ENCODE measurements at regions of chr19 and their contacts with region 1.

Region 1: DNA sequence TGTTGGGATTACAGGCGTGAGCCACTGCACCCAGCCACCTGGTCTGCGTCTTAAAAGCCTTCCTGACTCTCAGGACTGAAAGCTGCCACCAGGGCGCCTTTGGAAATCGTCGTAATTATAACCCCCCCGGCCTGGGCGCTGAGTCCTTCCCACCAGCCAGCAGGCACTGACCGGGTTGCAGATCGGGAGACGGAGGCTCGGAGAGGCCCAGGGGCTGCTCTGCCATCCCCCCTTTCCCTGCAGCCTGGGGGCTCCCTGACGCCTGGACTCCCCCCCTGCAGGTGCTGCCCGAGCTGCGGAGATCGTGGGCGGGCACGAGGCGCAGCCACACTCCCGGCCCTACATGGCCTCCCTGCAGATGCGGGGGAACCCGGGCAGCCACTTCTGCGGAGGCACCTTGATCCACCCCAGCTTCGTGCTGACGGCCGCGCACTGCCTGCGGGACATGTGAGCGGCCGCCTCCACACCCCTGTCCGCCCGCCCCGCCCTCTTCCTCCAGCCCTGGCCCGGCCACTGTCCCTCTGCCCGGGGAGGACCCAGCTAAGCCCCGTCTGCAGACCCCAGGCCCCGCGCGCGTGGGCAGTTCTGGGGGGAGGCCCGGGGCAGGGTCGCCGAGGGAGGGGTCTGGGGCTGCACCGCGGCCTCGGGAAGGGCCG is 2.5 kb downstream of the PRTN3 start:
- DNase-seq: no peak
- ATAC-seq: peak; percentile 88
- H3K4me3 ChIP-seq: peak overlapping the region; percentile 30 to 45
- H3K27ac ChIP-seq: no peak overlapping the region
- H3K4me1 ChIP-seq: peaks cover 4% of the 10 kb centered on the region; the same call in 1 of the 2 replicates
- H3K27me3 ChIP-seq: no peaks in the 10 kb centered on the region
- CTCF ChIP-seq: no peak

Region 2: DNA sequence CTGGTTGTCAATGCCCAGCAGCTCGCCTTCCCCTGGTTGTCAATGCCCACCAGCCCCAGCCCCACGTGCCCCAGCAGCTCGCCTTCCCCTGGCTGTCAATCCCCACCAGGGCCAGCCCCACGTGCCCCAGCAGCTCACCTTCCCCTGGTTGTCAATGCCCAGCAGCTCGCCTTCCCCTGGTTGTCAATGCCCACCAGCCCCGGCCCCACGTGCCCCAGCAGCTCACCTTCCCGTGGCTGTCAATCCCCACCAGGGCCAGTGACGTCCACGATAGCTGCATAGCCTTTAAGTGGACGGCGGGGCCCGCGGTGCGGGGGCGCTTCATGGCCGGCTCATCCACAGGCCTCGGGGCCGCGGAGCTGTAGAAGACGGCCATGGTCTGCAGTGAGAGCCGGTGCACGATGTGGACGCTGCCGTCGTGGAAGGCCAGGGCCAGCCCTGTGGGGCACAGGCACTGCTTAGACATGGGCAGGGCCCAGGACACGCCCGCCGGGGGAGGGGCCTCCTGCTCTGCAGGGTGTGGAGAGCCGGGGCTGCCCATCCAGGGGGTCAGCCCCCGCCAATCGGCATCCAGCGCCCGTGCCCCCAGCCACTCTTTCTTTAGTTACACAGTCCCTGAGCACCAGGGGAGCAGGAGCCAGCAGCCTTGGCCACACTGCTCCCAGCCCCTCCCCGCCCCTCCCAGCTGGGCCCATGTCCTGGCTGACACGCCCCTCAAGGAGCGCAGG is 36.6 kb after region 1 on chr19:
- CTCF ChIA-PET with region 1: interaction called, 9 read pairs
- POLR2A ChIA-PET with region 1: interaction called, 12 read pairs
- in situ Hi-C with region 1: no loop called
- intact Hi-C with region 1: no loop called
- DNase-seq: no peak
- ATAC-seq: no peak; the same call in 1 of the 2 replicates
- H3K4me3 ChIP-seq: no peak overlapping the region
- H3K27ac ChIP-seq: no peak overlapping the region
- H3K4me1 ChIP-seq: no peaks in the 10 kb centered on the region
- H3K27me3 ChIP-seq: no peaks in the 10 kb centered on the region
- CTCF ChIP-seq: no peak